ENCODE measurements at regions of chr1 and their contacts with region 1.

Region 1: GRCh38 chr1:180585994-180586359 is 27.2 kb downstream of the OVAAL start:
- DNase-seq: no peak
- H3K4me3 Mint-ChIP-seq: no peak overlapping the region
- H3K27ac Mint-ChIP-seq: peak overlapping the region; percentile 82
- H3K4me1 Mint-ChIP-seq: peaks cover 20% of the 10 kb centered on the region
- H3K27me3 Mint-ChIP-seq: peaks cover 2% of the 10 kb centered on the region

Region 2: DNA sequence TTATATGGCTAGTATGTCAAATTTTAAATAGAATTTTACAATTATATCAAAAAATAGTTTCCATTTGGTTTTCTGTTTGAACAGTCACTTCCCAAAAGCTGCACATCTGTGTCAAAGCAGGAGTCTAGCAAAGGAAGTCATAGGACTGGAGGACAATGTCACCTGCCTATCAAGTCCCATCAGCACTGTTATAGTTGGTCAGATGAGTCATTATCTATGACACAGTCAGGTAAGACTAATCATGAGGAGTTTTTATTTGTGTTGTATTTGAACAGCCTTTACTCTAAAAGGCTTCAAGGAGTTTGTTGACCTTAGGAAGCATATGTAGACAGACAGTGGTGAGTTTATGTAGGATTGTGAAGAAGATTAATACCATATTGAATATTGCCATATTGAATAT is 505.5 kb before region 1 on chr1:
- CTCF ChIA-PET with region 1: no interaction called
- intact Hi-C with region 1: no loop called
- DNase-seq: peak; percentile 8
- H3K4me3 Mint-ChIP-seq: no peak overlapping the region
- H3K27ac Mint-ChIP-seq: no peak overlapping the region
- H3K4me1 Mint-ChIP-seq: peaks cover 2% of the 10 kb centered on the region
- H3K27me3 Mint-ChIP-seq: no peaks in the 10 kb centered on the region

Region 3: DNA sequence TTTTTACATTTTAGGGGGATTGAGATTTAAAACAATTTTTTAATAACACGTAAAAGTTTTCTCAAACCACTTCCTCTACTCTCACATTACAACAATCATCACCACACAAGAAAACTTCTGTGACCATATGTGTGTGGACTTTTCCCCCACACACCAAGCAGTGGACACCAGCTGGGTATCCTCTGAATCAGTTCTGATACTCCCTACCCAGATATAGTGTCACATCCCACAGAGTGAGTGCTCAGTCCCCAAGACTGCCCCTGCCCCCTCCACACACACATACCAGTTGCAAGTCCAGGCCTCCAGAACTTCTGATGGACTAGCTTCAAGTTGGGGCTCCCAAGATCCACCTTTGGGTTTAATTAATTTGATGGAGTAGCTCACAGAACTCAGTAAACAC is 484.6 kb before region 1 on chr1:
- CTCF ChIA-PET with region 1: no interaction called
- intact Hi-C with region 1: no loop called
- DNase-seq: no peak
- H3K4me3 Mint-ChIP-seq: no peak overlapping the region
- H3K27ac Mint-ChIP-seq: no peak overlapping the region
- H3K4me1 Mint-ChIP-seq: peaks cover 2% of the 10 kb centered on the region
- H3K27me3 Mint-ChIP-seq: no peaks in the 10 kb centered on the region

Region 4: DNA sequence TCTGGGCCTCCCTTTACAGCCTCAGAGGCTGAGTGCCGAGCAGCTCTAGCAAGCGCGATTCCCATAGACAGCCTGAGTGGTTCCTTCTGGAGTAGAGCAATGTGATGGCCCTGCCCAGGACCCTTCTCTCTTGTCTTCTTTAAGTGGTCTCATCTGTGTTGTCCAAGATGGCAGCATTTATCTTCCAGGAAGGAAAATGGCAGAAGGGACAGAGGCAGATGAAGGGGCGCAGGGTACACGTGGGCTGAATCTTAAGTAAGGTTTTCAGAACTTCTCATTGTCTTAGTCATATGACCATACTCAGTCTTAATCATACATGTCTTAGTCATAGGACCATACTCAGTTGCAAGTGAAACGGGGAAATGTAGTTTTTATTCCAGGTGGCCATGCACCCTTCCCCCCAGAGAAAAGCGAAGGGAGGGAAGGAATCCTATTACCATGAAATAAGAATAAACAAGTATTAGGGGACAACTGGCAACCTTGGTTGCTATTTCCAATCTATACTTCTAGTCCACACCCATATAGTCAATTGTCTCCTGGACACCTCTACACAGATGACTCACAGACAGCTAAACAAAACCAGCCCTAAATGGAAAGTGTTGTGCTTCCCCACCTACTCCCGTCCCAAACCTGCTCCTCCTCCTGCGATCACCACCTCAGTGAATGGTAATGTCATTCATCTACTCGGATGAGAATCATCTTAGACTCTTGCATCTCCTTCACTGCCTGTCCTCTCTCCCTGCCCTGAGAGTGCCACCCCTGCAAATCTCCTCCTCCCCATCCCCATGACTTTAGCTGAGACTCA is 13.9 kb before region 1 on chr1:
- CTCF ChIA-PET with region 1: interaction called, 3 read pairs
- intact Hi-C with region 1: loop called (anchors 1 kb)
- DNase-seq: peak; percentile 67
- H3K4me3 Mint-ChIP-seq: no peak overlapping the region
- H3K27ac Mint-ChIP-seq: peak overlapping the region; percentile 72
- H3K4me1 Mint-ChIP-seq: peaks cover 25% of the 10 kb centered on the region
- H3K27me3 Mint-ChIP-seq: peaks cover 10% of the 10 kb centered on the region

Region 5: GRCh38 chr1:180623579-180624347 is 37.8 kb after region 1 on chr1:
- CTCF ChIA-PET with region 1: no interaction called
- intact Hi-C with region 1: no loop called
- DNase-seq: no peak
- H3K4me3 Mint-ChIP-seq: no peak overlapping the region
- H3K27ac Mint-ChIP-seq: no peak overlapping the region
- H3K4me1 Mint-ChIP-seq: no peaks in the 10 kb centered on the region
- H3K27me3 Mint-ChIP-seq: peaks cover 9% of the 10 kb centered on the region

Measured in activated naive CD4-positive, alpha-beta T cell treated with anti-CD3 and anti-CD28 coated beads for 36 hours (primary cell).